GM10248 (cell line): ENCODE measurements at regions of chr12 and their contacts with region 1.

Region 1: DNA sequence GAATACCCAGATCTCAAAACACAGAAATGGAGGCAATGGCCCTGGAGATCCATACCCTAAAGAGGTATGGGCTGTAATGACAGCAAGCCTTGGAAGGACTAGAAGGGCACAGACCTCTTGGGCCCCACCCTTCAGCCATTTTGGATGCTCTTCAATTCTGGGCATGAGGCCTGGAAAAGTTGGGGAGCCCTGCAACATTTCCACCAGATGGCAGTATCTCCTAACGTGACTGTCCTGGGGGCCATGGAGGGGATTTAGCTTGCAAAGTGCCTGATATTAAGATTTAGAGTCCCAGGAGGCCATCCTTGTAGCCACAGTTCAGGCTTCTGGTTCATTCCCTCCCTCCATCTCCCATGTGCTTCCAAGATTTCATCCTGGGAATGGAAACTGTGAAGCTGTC is 30.2 kb downstream of the KCNA5 start:
- DNase-seq: no peak
- CTCF ChIP-seq: no peak

Region 2: DNA sequence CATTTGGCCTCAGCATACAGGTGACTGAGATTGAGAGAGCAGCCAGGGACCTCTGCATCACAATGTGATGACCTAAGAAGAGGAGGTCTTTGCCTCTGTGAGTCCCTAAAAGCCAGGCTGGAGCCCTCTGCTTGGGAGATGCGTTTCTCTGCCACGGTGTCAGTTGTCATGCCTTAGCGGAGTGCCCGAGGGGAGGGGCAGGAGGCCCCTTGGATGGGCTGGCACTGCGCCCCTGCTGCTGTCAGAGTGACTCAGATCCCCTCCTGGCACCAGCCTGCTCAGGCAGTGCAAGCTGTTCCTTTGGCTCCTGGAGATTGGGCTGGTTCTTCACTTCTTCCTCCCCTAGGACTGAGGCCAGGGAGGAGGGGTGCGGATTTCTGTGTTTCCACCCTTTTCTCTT is 95.1 kb before region 1 on chr12:
- CTCF ChIA-PET with region 1: no interaction called
- POLR2A ChIA-PET with region 1: no interaction called
- DNase-seq: no peak
- CTCF ChIP-seq: no peak

Region 3: DNA sequence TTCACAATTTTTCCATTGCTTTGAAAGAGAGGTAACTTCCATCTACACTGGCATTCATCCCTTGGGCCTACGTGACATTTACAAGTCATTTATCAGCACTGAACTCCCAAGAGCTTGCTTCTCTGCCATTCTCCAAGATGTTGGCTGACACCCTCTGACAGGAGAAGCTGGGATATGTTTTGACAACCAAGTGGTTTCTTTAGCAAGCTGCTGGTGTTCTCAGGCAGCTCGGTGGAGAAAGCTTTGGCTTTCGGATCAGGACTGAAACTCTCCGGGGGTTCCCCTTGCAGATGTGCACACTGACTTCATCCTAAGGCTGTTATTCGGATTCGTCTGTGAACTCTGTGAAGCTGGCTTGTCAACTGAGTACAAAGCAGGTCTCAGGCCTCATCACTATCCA is 14.5 kb before region 1 on chr12:
- CTCF ChIA-PET with region 1: interaction called, 12 read pairs
- POLR2A ChIA-PET with region 1: no interaction called
- DNase-seq: peak; percentile 41
- CTCF ChIP-seq: no peak